Heart right ventricle (tissue), 16 donors: ENCODE measurements at regions of chr7 and their contacts with region 1.

Region 1: DNA sequence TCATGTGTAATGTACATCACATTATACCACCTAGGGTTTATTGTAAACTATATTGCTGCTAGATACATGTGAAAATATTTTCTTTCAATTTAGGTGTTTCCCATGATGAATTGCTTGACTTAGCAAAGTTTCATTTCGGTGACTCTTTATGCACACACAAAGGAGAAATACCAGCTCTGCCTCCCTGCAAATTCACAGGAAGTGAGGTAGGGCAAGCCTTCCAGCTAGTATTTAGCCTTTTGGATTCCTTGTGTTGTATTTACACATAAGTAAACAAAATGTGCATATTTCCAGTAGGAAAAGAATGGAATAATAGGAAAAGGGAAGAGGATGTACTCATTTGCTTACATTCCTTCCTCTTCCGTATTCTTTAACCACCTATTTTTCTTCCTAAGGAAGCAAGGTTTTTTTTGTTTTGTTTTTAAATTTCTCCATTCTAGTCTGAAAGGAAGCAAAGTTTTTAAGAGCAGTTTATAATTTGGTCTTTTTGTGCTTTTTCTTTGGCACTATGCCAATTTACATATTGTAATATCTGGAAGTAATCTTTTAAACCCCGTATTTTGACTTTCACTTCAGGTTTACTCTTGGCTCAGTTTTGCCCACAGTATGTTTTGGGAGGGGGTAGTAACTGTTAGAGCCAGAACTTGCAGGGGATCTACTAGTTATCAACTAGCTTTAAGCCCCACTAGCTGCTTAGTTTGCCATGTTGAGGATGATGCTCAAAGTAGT is 10.4 kb downstream of the PMPCB start:
- DNase-seq: no peak
- ATAC-seq: no peak
- H3K4me3 ChIP-seq: no peak overlapping the region
- H3K27ac ChIP-seq: peak overlapping the region in 1 of 10 donors; percentile 11
- H3K4me1 ChIP-seq: peaks cover 0 to 9% (median 0%) of the 10 kb centered on the region in 9 donors
- H3K27me3 ChIP-seq: no peaks in the 10 kb centered on the region
- CTCF ChIP-seq: no peak

Region 2: DNA sequence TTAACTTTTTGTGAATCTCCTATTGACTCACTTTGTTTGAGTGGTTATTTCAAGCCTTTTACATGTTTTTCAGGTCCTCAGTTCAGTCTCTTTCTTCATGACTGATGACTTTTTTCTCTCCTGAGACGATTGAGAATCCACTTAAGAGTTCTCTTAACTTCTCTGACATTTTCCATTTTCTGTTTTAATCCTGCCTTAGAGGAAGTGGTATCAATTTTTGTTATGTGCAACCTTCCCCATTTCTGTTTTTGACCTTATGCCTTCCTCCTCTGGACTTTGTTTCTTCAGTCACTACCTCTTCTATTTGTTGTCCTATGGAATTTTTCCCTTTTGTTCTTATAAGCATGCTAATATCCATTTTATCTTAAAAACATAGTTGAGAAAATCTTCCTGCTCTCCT is 42.1 kb after region 1 on chr7:
- intact Hi-C with region 1: loop called in 1 of 10 experiments (anchors 5 kb)
- DNase-seq: no peak
- ATAC-seq: no peak
- H3K4me3 ChIP-seq: peak overlapping the region in 1 of 10 donors; percentile 84
- H3K27ac ChIP-seq: peak overlapping the region in 1 of 10 donors; percentile 35
- H3K4me1 ChIP-seq: peaks cover 4 to 59% (median 50%) of the 10 kb centered on the region in 9 donors
- H3K27me3 ChIP-seq: no peaks in the 10 kb centered on the region
- CTCF ChIP-seq: no peak